WTC11 (cell line): ENCODE measurements at regions of chr3 and their contacts with region 1.

Region 1: GRCh38 chr3:13282986-13283876 is 136.9 kb downstream of the NUP210 start:
- DNase-seq: peak; percentile 69
- ATAC-seq: peak; percentile 73
- H3K4me3 Mint-ChIP-seq: peak overlapping the region; percentile 73
- H3K27ac Mint-ChIP-seq: no peak overlapping the region
- H3K4me1 Mint-ChIP-seq: peaks cover 13% of the 10 kb centered on the region
- H3K27me3 Mint-ChIP-seq: peaks cover 31% of the 10 kb centered on the region
- CTCF ChIP-seq: no peak

Region 2: GRCh38 chr3:13200946-13201345 is 82.3 kb before region 1 on chr3:
- CTCF ChIA-PET with region 1: interaction called, 19 read pairs
- POLR2A ChIA-PET with region 1: no interaction called
- DNase-seq: peak; percentile 64
- ATAC-seq: peak; percentile 80
- H3K4me3 Mint-ChIP-seq: no peak overlapping the region
- H3K27ac Mint-ChIP-seq: peak overlapping the region; percentile 36; the same call in 1 of the 2 replicates
- H3K4me1 Mint-ChIP-seq: peaks cover 18% of the 10 kb centered on the region
- H3K27me3 Mint-ChIP-seq: no peaks in the 10 kb centered on the region
- CTCF ChIP-seq: 0 out of 2 replicates have a peak, but pooled peaks have one; percentile 19

Region 3: DNA sequence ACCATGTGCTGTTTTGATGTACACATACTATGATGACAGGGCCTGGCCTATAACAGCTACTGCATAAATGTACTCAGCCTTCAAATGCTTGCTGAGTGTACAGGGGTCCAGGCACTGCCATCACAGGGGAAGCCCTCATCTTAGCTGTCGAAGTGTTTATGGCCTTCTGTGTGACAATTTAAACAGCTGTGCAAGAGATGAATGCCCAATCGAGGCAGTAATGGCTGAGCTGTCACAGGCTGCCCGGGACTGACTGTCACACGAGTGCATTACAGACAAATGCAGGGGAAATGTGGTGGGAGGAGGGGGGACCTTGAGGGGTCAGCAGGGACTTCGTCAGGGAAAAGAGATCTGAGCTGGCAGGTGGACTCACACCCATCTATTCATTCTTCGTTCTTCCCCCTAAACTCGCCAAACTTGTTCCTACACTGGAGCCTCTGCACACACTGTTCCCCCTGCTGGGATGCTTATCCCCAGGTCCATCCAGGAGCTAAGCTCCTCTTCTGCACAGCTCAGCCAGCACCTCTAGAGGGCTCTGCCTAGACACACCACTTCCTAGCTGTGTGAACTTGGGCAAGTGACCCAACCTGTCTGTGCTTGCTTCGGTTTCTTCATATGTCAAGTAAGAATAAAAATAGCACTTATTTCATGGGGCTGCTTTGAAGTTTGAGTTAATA is 53.8 kb before region 1 on chr3:
- CTCF ChIA-PET with region 1: interaction called, 20 read pairs
- POLR2A ChIA-PET with region 1: no interaction called
- DNase-seq: peak; percentile 65
- ATAC-seq: peak; percentile 99
- H3K4me3 Mint-ChIP-seq: no peak overlapping the region
- H3K27ac Mint-ChIP-seq: no peak overlapping the region
- H3K4me1 Mint-ChIP-seq: peaks cover 24% of the 10 kb centered on the region
- H3K27me3 Mint-ChIP-seq: no peaks in the 10 kb centered on the region
- CTCF ChIP-seq: peak; percentile 20; the same call in 1 of the 2 replicates

Region 4: GRCh38 chr3:13260259-13261103 is 22.8 kb before region 1 on chr3:
- CTCF ChIA-PET with region 1: interaction called, 11 read pairs
- POLR2A ChIA-PET with region 1: no interaction called
- DNase-seq: no peak
- ATAC-seq: no peak
- H3K4me3 Mint-ChIP-seq: no peak overlapping the region
- H3K27ac Mint-ChIP-seq: peak overlapping the region; percentile 54; the same call in 1 of the 2 replicates
- H3K4me1 Mint-ChIP-seq: peaks cover 22% of the 10 kb centered on the region
- H3K27me3 Mint-ChIP-seq: no peaks in the 10 kb centered on the region
- CTCF ChIP-seq: no peak

Region 5: DNA sequence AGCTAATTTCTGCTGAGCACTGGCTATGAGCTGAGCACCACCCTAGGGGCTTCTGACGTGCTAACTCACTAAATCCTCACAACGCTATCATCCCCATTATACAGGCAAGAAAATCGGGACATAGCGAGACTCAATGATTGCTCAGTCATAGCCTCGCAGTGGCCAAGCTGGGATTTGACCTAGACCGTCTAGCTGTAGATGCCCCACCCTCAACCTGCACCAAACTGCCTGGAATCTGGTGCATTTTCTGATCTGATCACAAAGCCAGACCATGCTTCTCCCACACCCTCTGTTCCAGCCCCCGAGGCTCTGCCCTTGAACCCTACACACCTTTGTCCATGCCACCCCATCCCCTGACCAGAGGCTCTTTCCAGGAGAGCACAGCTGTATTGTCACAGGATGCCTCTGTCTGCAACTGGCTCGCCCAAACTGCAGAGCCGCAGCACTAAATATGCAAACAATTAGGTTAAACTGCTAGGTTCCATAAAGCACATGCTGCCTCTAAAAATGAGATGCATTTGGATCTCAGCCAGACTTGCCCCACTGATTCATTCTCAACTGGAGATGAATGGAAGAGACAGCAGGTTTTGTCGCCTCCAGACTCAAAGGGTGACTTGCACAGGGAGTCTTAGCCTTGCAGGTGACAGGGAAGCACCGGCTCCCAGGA is 41.7 kb after region 1 on chr3:
- CTCF ChIA-PET with region 1: interaction called, 10 read pairs
- POLR2A ChIA-PET with region 1: no interaction called
- DNase-seq: no peak
- ATAC-seq: no peak
- H3K4me3 Mint-ChIP-seq: no peak overlapping the region
- H3K27ac Mint-ChIP-seq: peak overlapping the region; percentile 53; the same call in 1 of the 2 replicates
- H3K4me1 Mint-ChIP-seq: no peaks in the 10 kb centered on the region
- H3K27me3 Mint-ChIP-seq: no peaks in the 10 kb centered on the region
- CTCF ChIP-seq: no peak

Region 6: GRCh38 chr3:13346481-13347389 is 63.5 kb after region 1 on chr3:
- CTCF ChIA-PET with region 1: interaction called, 32 read pairs
- POLR2A ChIA-PET with region 1: no interaction called
- DNase-seq: peak; percentile 58
- ATAC-seq: peak; percentile 68
- H3K4me3 Mint-ChIP-seq: peak overlapping the region; percentile 59
- H3K27ac Mint-ChIP-seq: peak overlapping the region; percentile 97
- H3K4me1 Mint-ChIP-seq: peaks cover 73% of the 10 kb centered on the region
- H3K27me3 Mint-ChIP-seq: no peaks in the 10 kb centered on the region
- CTCF ChIP-seq: no peak

Region 7: DNA sequence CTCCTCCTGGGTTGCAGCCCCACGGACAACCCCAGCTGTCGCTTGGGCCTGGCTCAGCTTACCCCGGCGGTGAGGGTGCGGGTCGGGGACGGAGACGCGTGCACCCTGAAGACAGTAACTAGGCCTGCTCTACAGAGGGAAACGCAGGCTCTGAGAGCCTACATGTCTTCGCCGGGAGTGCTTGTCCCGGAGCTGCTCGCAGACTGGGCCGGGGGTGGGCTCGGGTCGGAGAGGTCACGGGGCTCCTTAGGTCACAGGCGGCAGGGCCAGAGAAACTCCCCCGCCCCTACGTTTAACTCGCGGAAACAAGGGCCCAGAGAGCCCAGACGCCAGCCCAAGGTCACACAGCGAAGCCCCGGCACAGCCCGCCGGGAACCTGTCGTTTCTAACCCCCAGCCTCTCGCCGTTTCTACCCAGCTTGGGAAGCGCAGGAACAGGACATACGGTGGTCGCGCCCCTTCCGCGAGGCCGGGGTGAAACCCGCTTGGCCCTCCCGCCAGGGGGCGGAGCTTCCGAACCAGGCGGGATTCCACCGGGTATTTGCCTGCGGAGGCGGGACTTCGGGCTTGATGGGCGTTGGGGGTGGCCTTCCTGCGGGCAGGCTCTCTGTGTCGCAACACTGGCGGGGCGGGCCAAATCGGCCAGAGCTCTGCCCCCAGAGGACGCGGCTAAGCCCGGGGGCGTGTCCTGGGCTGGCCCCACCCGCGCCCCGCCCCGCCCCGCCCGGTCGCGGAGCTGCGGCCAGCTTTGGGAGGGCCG is 196.5 kb after region 1 on chr3 and contains the start of gene HDAC11:
- CTCF ChIA-PET with region 1: interaction called, 11 read pairs
- POLR2A ChIA-PET with region 1: interaction called, 3 read pairs
- DNase-seq: peak; percentile 99
- ATAC-seq: peak; percentile 93
- H3K4me3 Mint-ChIP-seq: peak within 1 kb of the TSS; percentile 85
- H3K27ac Mint-ChIP-seq: peak within 1 kb of the TSS; percentile 91
- H3K4me1 Mint-ChIP-seq: peaks cover 33% of the 10 kb centered on the region
- H3K27me3 Mint-ChIP-seq: peaks cover 28% of the 10 kb centered on the region
- CTCF ChIP-seq: no peak
- total RNA-seq, gene HDAC11: 11.5 to 12.5 TPM (median 12.0 TPM) in 3 replicates